Activated CD8-positive, alpha-beta T cell treated with anti-CD3 and anti-CD28 coated beads, Interleukin-2, amount 10 ng/mL, durations not matched to agents 7 days and 5 days (primary cell): ENCODE measurements at regions of chr15 and their contacts with region 1.

Region 1: DNA sequence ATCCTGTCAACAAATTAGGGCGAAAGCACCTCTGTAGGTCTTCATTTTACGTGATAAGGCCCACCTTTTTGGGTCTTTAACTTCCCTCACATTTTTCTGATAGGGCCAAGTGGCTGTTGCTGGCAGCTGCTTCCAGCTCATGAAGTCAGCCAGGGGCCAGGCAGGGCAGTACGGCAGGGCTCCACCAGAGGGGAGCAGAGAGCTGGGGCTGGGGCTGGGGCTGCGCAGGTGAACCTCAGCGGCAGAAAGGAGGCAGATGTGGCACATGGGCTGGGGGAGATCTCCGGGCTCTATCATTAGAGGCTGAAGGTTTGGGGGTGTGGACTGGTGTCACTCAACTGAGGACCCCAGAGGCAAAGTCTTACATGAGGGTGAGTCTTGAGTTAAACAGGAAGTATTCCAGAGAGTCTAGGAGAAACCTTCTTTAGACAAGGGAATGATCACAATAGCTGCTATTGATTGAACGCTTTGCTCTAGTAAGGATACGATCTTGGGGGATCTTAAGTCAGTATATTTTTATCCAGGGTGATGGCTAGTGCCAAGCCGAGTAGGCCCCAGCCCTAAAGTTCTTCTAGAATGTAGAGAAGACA is 62.8 kb upstream of the MEX3B start:
- DNase-seq: peak; percentile 80
- ATAC-seq: peak; percentile 94
- H3K4me3 Mint-ChIP-seq: no peak overlapping the region
- H3K27ac Mint-ChIP-seq: no peak overlapping the region
- H3K4me1 Mint-ChIP-seq: peaks cover 5% of the 10 kb centered on the region
- H3K27me3 Mint-ChIP-seq: no peaks in the 10 kb centered on the region

Region 2: DNA sequence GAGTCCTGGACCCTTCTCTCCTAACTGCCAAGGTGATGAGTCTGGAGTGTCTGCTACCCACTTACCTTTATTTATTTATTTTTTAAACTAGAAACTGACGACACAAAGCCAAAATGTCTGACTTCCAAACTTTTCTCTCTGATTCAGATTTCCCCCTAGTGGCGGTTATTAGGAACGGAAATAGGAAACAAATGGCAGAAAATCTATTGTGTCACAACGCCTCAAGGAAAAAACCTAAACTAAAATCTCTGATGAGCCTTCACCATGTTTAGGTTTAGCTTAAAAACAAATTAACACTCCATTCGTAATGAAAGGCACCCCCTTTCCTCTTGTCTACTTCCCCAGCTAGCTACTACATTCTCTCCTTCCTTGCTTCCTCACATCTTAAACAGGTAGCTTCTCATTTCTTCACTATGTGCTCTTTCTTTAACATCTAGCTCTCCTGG is 31.3 kb after region 1 on chr15:
- CTCF ChIA-PET with region 1: interaction called, 20 read pairs
- POLR2A ChIA-PET with region 1: no interaction called
- DNase-seq: no peak
- ATAC-seq: no peak
- H3K4me3 Mint-ChIP-seq: no peak overlapping the region
- H3K27ac Mint-ChIP-seq: peak overlapping the region; percentile 28
- H3K4me1 Mint-ChIP-seq: peaks cover 2% of the 10 kb centered on the region
- H3K27me3 Mint-ChIP-seq: no peaks in the 10 kb centered on the region

Region 3: GRCh38 chr15:82197733-82198594 is 89.4 kb after region 1 on chr15:
- CTCF ChIA-PET with region 1: interaction called, 26 read pairs
- POLR2A ChIA-PET with region 1: no interaction called
- DNase-seq: peak; percentile 77
- ATAC-seq: peak; percentile 89
- H3K4me3 Mint-ChIP-seq: no peak overlapping the region
- H3K27ac Mint-ChIP-seq: no peak overlapping the region
- H3K4me1 Mint-ChIP-seq: no peaks in the 10 kb centered on the region
- H3K27me3 Mint-ChIP-seq: no peaks in the 10 kb centered on the region